Natural killer cell (primary cell): ENCODE measurements at regions of chr13 and their contacts with region 1.

Region 1: GRCh38 chr13:43804461-43805070 is 17.8 kb upstream of the ENOX1 start:
- DNase-seq: peak in 1 of 2 donors; percentile 67
- ATAC-seq: peak in 1 of 3 donors; percentile 42
- H3K4me3 ChIP-seq: no peak overlapping the region
- H3K4me3 Mint-ChIP-seq: no peak overlapping the region
- H3K27ac ChIP-seq: no peak overlapping the region
- H3K27ac Mint-ChIP-seq: no peak overlapping the region
- H3K4me1 ChIP-seq: no peaks in the 10 kb centered on the region
- H3K4me1 Mint-ChIP-seq: no peaks in the 10 kb centered on the region
- H3K27me3 ChIP-seq: no peaks in the 10 kb centered on the region
- H3K27me3 Mint-ChIP-seq: peaks cover 0 to 17% of the 10 kb centered on the region in 2 donors
- CTCF ChIP-seq: peak; percentile 42

Region 2: GRCh38 chr13:42594970-42595571 is 1209.5 kb before region 1 on chr13:
- intact Hi-C with region 1: loop called (anchors 5 kb)
- DNase-seq: peak; percentile 20 to 73
- ATAC-seq: peak; percentile 68 to 80 (median 79)
- H3K4me3 ChIP-seq: no peak overlapping the region
- H3K4me3 Mint-ChIP-seq: no peak overlapping the region
- H3K27ac ChIP-seq: no peak overlapping the region
- H3K27ac Mint-ChIP-seq: no peak overlapping the region
- H3K4me1 ChIP-seq: no peaks in the 10 kb centered on the region
- H3K4me1 Mint-ChIP-seq: peaks cover 9 to 12% of the 10 kb centered on the region in 2 donors
- H3K27me3 ChIP-seq: no peaks in the 10 kb centered on the region
- H3K27me3 Mint-ChIP-seq: no peaks in the 10 kb centered on the region
- CTCF ChIP-seq: peak; percentile 89

Region 3: DNA sequence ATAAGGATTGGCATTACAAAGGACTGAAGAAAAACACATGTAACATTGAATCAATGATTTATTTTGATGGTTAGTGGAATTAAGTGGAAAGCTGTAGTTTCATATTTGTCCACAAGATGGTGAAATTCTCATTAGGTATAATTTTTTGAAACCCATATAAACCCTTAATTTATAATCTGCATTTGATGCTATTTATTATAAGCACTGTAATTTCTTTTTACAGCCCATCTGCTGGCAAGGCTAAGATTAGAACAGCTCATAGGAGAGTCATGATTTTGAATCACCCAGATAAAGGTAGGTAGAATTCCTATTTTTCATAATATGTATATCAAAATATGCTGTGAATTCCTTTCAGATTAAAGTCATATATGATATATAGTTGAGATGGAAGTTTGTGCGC is 719.0 kb before region 1 on chr13:
- intact Hi-C with region 1: loop called (anchors 2 kb)
- DNase-seq: peak in 1 of 2 donors; percentile 52
- ATAC-seq: peak in 1 of 3 donors; percentile 34
- H3K4me3 ChIP-seq: no peak overlapping the region
- H3K4me3 Mint-ChIP-seq: no peak overlapping the region
- H3K27ac ChIP-seq: no peak overlapping the region
- H3K27ac Mint-ChIP-seq: peak overlapping the region in 1 of 2 donors; percentile 18
- H3K4me1 ChIP-seq: no peaks in the 10 kb centered on the region
- H3K4me1 Mint-ChIP-seq: peaks cover 18 to 22% of the 10 kb centered on the region in 2 donors
- H3K27me3 ChIP-seq: no peaks in the 10 kb centered on the region
- H3K27me3 Mint-ChIP-seq: no peaks in the 10 kb centered on the region
- CTCF ChIP-seq: peak; percentile 76

Region 4: DNA sequence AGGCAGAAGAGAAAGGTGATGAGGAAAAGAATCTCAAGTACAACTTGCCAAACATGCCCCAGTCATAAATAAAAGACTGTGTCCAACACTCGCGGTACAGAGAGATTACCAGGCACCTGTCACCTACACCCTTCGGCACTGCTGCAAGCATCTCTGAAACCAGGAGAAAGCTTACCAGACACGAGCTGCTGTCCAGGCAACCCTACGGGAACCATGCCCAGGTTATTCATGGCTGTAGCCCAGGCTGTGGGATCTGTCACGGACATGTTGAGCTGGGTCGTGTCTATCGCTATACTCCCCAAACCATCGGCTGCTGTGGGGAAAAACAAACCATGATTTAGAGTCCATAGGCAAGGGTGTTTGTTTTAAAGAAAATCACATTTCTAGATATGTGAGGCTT is 392.8 kb before region 1 on chr13:
- intact Hi-C with region 1: no loop called
- DNase-seq: no peak
- ATAC-seq: no peak
- H3K4me3 ChIP-seq: no peak overlapping the region
- H3K4me3 Mint-ChIP-seq: no peak overlapping the region
- H3K27ac ChIP-seq: no peak overlapping the region
- H3K27ac Mint-ChIP-seq: no peak overlapping the region
- H3K4me1 ChIP-seq: no peaks in the 10 kb centered on the region
- H3K4me1 Mint-ChIP-seq: no peaks in the 10 kb centered on the region
- H3K27me3 ChIP-seq: no peaks in the 10 kb centered on the region
- H3K27me3 Mint-ChIP-seq: peaks cover 0 to 3% of the 10 kb centered on the region in 2 donors
- CTCF ChIP-seq: no peak